ENCODE measurements at regions of chr5 and their contacts with region 1.

Region 1: DNA sequence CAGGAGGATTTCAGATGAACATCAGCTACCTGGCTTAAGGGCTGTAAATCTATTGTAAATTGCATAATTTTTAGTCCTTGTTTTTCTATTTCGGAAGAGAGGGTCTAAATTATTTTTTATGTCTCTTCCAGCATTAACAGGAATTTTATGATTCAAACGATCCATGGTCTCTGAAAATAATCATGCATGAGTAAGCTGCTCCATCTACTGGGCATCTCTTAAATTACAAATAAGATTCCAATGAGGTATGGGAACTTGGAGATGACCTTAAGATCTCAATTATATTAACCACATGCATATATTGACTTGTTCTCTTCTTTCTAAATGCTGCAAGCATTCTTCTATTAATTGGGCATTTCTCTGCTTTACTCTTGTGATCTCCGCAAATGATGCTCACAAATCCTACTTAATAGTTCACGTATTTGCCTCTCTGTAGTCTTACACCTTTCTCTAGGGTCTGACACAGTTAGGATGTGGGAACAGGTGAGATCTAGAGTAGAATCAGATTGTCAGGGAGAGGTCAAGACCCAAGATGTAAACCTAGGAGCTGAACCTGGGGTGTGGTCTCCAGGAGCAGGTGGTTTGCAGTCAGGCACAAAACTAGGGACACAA is 86.9 kb downstream of the NUDT12 start:
- DNase-seq: no peak
- ATAC-seq: peak; percentile 47

Region 2: DNA sequence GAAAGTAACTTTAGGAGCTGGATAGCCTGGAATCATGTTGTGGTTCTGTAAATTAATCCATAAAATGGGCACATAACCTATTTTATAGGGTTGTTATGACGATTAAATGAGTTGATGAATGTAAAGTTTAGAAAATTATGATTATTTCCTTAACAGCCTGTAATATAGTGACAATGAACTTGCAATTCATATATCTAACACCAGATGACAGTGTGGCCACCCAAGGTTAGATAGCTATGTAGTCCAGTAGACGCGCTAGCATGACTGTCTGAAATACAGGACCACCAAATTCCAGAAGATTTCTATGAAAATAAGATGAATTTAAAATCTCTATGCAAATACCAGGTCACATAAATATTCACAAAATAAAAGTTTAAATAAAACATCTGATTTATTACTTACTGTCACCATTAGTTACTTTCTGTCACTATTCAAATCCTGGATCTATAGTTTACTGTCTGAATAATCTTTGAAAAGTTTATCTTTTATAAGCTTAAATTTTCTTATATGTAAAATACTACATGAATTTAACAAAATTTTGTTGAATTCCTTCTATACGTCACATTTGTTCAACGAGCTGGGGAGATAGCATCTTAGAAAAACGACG is 243.2 kb before region 1 on chr5:
- intact Hi-C with region 1: loop called (anchors 2 kb)
- DNase-seq: no peak
- ATAC-seq: peak; percentile 69

Region 3: DNA sequence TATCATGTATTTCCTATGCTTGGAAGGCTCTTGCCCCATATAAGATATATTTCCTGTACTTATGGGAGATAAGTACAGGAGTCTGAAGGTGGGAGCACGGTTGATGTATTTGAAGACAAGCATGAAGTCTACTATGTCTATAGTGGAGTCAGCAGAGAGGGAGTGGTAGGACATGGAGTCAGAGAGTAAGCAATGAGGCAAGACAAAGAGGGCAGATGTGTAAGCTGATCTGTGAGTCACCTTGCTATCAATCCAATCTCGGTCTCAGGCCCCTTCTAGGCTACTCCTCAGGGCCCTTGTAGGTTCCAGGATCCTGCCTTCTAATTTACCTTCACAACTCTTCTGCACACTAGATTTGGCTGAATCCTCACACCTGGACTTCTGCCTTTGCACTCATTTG is 111.7 kb before region 1 on chr5:
- intact Hi-C with region 1: no loop called
- DNase-seq: no peak
- ATAC-seq: no peak

Region 4: DNA sequence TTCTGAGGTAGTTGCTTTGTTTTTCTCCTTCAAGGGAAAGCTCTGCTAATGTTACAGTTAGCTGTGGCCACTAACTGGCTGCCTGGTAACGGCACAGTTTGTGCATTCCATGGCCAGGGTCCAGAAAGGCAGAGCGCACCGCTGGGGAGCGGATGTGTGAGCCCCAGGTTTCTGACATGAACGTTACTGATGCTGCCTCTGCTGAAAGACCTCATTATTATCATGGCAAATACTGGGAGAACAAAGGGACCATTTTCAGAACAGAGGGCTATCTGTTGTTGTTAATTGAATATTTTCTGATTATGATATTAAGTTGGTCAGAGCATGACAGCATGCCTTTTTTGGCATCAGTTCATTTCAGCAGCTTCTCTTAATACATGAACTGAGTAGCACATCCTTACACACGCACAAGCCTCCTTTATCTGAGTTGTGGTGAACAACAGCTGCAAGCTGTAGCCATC is 47.3 kb before region 1 on chr5:
- intact Hi-C with region 1: no loop called
- DNase-seq: peak; percentile 49
- ATAC-seq: peak; percentile 92

Measured in left ventricle myocardium superior (tissue), 1 donor.